ENCODE measurements at regions of chr4 and their contacts with region 1.

Region 1: DNA sequence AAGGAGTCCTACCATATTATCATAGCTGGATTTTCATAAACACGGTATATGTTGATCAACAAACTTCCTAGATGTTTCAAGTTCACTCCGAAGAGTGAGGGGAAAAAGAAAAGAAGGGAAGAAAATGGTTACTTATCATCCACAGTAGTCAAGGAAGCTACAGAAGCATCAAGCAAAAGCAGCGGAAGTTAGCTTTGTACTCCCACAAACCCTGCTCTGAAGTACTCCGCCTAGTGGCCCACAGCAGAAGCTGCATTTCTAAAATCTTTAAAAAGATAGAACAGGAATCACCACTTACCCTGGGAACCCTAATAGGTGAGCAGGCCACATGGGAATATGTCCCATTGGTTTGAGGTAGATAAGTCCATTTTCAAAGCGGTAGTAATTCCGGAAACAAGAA is 28.5 kb upstream of the FRG1 start:
- DNase-seq: no peak
- H3K4me3 Mint-ChIP-seq: no peak overlapping the region
- H3K27ac Mint-ChIP-seq: no peak overlapping the region
- H3K4me1 Mint-ChIP-seq: no peaks in the 10 kb centered on the region
- H3K27me3 Mint-ChIP-seq: no peaks in the 10 kb centered on the region
- CTCF ChIP-seq: no peak

Region 2: GRCh38 chr4:189792924-189793618 is 119.1 kb before region 1 on chr4:
- CTCF ChIA-PET with region 1: no interaction called
- intact Hi-C with region 1: loop called (anchors 10 kb)
- DNase-seq: peak; percentile 61
- H3K4me3 Mint-ChIP-seq: no peak overlapping the region
- H3K27ac Mint-ChIP-seq: no peak overlapping the region
- H3K4me1 Mint-ChIP-seq: no peaks in the 10 kb centered on the region
- H3K27me3 Mint-ChIP-seq: no peaks in the 10 kb centered on the region
- CTCF ChIP-seq: peak; percentile 58

Measured in Calu3 (cell line).